Posterior vena cava (tissue), 2 donors: ENCODE measurements at regions of chr10 and their contacts with region 1.

Region 1: GRCh38 chr10:3197348-3198003 is 24.9 kb upstream of the PITRM1 start:
- DNase-seq: peak; percentile 94

Region 2: DNA sequence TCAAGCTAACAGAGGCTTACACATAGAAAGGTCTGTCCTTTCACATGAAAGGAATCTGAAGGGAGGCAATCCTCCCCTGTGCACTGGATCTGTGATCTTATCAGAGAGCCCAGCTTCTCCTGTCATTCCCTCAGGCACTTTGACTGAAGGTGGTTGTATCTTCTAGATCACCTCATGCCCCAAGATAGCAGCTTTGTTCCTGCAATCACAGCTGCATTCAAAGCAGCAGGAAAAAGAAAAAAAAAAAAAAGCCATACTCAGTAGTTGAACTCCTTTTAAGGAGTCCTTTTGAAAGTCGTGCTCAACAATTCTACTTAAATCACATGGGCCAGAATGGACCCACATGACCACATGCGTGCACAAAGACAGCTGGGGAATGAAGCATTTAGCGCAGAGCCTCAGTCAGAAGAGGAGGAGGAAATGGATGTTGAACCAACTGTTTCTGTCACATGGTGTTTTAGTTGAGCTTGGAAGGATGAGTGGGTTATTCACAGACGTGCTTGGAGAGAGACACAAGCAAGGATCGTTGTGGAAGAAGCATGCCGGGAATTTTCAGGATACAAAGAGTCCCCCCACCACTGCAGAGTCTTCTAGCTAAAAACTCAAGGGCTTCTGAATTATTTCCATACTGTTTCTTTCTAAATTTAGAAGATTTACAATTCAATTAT is 143.2 kb before region 1 on chr10:
- intact Hi-C with region 1: no loop called
- DNase-seq: no peak

Region 3: GRCh38 chr10:3668276-3668965 is 470.9 kb after region 1 on chr10:
- intact Hi-C with region 1: loop called in 1 of 2 experiments (anchors 5 kb)
- DNase-seq: peak; percentile 89